Endothelial cell of umbilical vein (primary cell): ENCODE measurements at regions of chr3 and their contacts with region 1.

Region 1: DNA sequence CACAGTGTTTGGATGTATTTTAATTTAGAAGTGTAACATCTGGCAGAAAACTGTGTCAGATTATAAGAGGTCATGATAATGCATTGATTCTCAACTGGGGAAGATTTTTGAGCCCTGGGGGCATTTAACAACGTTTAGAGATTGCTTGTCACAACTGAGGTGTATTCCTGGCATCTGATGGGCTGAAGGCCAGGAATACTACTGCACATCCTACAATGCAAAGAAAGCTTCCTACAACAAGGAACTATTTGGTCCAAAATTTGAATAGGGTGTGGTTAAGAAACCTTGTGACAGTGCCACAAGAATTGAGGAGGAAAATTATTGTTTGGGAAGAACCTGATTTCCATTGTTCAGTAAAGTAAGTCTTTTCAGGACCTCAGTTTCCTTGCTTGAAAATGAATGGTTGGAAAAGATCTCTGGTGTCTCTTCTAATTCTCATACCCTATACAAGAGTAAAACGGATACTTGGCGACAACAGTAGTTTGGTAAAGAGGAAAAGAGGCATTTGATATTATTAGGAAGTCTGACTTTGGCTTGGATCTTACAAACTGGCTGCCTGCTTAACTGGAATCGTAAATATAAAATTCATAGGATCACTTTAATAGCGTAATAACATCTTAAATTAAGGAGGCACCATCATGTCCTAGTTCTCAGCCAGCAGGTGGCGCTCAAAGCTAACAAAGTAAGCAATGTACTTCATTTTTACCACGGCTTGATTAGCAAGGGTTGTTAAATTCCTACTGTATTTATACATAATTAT is 4.3 kb downstream of the DAZL start:
- DNase-seq: peak; percentile 80
- H3K4me3 ChIP-seq: no peak overlapping the region
- H3K27ac ChIP-seq: no peak overlapping the region
- H3K4me1 ChIP-seq: no peaks in the 10 kb centered on the region
- H3K27me3 ChIP-seq: peaks cover 0 to 6% of the 10 kb centered on the region in 2 experiments
- CTCF ChIP-seq: peak; percentile 56 to 61
- POLR2A ChIP-seq: no peak

Region 2: DNA sequence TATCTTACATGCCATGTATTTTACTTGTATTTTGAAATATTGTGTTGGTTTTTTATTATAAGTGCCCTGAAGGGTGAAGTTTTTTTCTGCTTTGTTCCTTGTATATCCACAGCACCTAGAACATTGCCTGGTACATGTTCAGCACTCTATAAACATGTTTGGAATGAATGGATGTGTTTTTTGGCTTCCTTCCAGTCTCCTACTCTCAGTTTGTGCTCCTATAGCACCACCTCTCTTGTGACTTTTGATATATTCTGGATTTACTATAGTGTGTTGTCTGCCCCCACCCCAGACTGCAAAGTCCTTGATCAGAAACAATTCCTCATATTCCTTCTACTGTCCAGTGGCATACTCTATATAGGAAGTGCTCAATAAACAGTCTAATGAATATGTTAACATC is 344.4 kb after region 1 on chr3:
- CTCF ChIA-PET with region 1: no interaction called
- POLR2A ChIA-PET with region 1: no interaction called
- dilution Hi-C with region 1: no loop called
- intact Hi-C with region 1: loop called (anchors 1 kb)
- DNase-seq: peak; percentile 58
- H3K4me3 ChIP-seq: no peak overlapping the region
- H3K27ac ChIP-seq: no peak overlapping the region
- H3K4me1 ChIP-seq: no peaks in the 10 kb centered on the region
- H3K27me3 ChIP-seq: no peaks in the 10 kb centered on the region
- CTCF ChIP-seq: no peak
- POLR2A ChIP-seq: no peak

Region 3: DNA sequence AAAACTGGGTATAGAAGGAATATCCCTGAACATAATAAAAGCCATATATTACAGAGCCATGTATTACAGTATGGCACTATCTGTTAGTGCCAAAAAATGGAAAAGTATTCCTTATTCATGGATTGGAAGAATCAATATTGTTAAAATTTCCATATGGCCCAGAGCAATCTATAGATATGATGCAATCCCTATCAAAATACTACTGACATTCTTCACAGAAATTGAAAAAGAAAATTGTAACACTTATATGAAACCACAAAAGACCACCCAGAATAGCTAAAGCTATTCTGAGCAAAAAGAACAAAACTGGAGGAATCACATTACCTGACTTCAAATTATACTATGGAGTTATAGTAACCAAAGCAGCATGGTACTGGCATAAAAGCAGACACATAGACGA is 502.6 kb after region 1 on chr3:
- CTCF ChIA-PET with region 1: no interaction called
- POLR2A ChIA-PET with region 1: no interaction called
- dilution Hi-C with region 1: no loop called
- intact Hi-C with region 1: loop called (anchors 10 kb)
- DNase-seq: no peak
- H3K4me3 ChIP-seq: no peak overlapping the region
- H3K27ac ChIP-seq: no peak overlapping the region
- H3K4me1 ChIP-seq: no peaks in the 10 kb centered on the region
- H3K27me3 ChIP-seq: peaks cover 0 to 1% of the 10 kb centered on the region in 2 experiments
- CTCF ChIP-seq: no peak
- POLR2A ChIP-seq: no peak

Region 4: GRCh38 chr3:17233398-17233800 is 632.4 kb after region 1 on chr3:
- CTCF ChIA-PET with region 1: interaction called, 20 read pairs
- POLR2A ChIA-PET with region 1: no interaction called
- dilution Hi-C with region 1: no loop called
- intact Hi-C with region 1: loop called (anchors 1 kb)
- DNase-seq: peak; percentile 74
- H3K4me3 ChIP-seq: no peak overlapping the region
- H3K27ac ChIP-seq: no peak overlapping the region
- H3K4me1 ChIP-seq: peaks cover 10% of the 10 kb centered on the region
- H3K27me3 ChIP-seq: no peaks in the 10 kb centered on the region
- CTCF ChIP-seq: peak; percentile 39 to 48
- POLR2A ChIP-seq: no peak

Region 5: DNA sequence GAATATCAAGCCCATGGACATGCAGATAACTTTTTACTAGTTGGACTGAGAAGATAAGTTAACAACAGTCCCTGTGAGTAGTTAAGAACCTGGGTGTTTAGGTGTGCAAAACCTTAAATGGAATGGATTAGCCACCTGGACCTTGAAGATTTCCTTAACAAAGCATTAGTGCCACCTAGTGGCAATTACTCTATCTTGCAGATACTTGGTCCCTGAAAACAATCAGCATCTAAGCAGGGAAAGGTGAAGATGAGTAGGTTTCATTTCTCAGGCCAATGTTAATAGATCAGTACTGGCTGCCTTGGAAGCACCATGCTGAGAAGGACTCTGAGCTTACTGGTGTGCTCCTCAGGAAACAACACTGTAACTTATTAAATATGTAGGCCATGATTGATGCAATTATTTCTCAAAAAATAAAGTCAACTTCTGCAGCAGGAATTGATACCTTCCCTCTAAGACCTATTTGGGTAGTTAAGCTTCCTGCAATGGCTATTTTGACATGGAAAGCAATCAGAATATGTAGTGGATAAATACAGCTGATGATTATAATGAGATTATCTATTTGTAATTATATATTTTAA is 812.1 kb after region 1 on chr3:
- CTCF ChIA-PET with region 1: interaction called, 29 read pairs
- POLR2A ChIA-PET with region 1: no interaction called
- dilution Hi-C with region 1: no loop called
- intact Hi-C with region 1: loop called (anchors 1 kb)
- DNase-seq: peak; percentile 63
- H3K4me3 ChIP-seq: no peak overlapping the region
- H3K27ac ChIP-seq: no peak overlapping the region
- H3K4me1 ChIP-seq: no peaks in the 10 kb centered on the region
- H3K27me3 ChIP-seq: no peaks in the 10 kb centered on the region
- CTCF ChIP-seq: peak; percentile 56 to 63
- POLR2A ChIP-seq: no peak